CD4-positive, alpha-beta memory T cell (primary cell): ENCODE measurements at regions of chr12 and their contacts with region 1.

Region 1: GRCh38 chr12:10364815-10365622 is 24.8 kb downstream of the KLRK1 start:
- DNase-seq: peak; percentile 71 to 81 (median 76)
- H3K4me3 ChIP-seq: peak overlapping the region; percentile 77 to 95
- H3K4me3 Mint-ChIP-seq: no peak overlapping the region
- H3K27ac ChIP-seq: peak overlapping the region; percentile 49
- H3K27ac Mint-ChIP-seq: no peak overlapping the region
- H3K4me1 ChIP-seq: peaks cover 16% of the 10 kb centered on the region
- H3K4me1 Mint-ChIP-seq: peaks cover 1 to 7% (median 5%) of the 10 kb centered on the region in 4 donors
- H3K27me3 ChIP-seq: no peaks in the 10 kb centered on the region
- H3K27me3 Mint-ChIP-seq: peaks cover 2 to 4% of the 10 kb centered on the region in 2 donors

Region 2: DNA sequence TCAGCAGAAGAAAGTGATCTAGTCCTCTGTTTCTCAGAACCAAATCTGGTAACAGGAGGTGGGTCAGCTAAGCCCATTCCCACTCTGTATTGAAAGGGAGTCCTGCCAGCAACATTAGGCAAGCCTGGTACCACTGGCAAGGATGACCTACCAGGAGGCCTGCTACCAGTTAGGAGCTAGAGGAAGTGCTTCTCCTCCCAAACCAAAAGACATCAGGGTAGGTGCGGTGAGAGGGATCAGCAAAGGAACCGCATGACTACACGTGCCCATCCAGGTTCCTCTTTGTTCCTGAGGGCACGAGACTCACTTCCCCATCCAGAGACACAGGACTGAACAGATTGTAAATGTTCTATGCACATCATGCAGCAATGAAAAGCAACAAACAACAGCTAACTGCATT is 41.7 kb after region 1 on chr12:
- CTCF ChIA-PET with region 1: no interaction called
- POLR2A ChIA-PET with region 1: no interaction called
- intact Hi-C with region 1: no loop called
- DNase-seq: no peak
- H3K4me3 ChIP-seq: no peak overlapping the region
- H3K4me3 Mint-ChIP-seq: no peak overlapping the region
- H3K27ac ChIP-seq: no peak overlapping the region
- H3K27ac Mint-ChIP-seq: no peak overlapping the region
- H3K4me1 ChIP-seq: no peaks in the 10 kb centered on the region
- H3K4me1 Mint-ChIP-seq: no peaks in the 10 kb centered on the region
- H3K27me3 ChIP-seq: no peaks in the 10 kb centered on the region
- H3K27me3 Mint-ChIP-seq: peaks cover 0 to 15% of the 10 kb centered on the region in 2 donors

Region 3: GRCh38 chr12:10613349-10614055 is 248.5 kb after region 1 on chr12 and contains the start of gene MAGOHB:
- CTCF ChIA-PET with region 1: no interaction called
- POLR2A ChIA-PET with region 1: interaction called, 12 read pairs
- intact Hi-C with region 1: loop called (anchors 1 kb)
- DNase-seq: peak; percentile 96 to 98 (median 96)
- H3K4me3 ChIP-seq: peak within 1 kb of the TSS; percentile 92 to 96
- H3K4me3 Mint-ChIP-seq: peak within 1 kb of the TSS; percentile 99 to 100 (median 100)
- H3K27ac ChIP-seq: peak within 1 kb of the TSS; percentile 93
- H3K27ac Mint-ChIP-seq: peak within 1 kb of the TSS; percentile 99 to 100 (median 100)
- H3K4me1 ChIP-seq: peaks cover 22% of the 10 kb centered on the region
- H3K4me1 Mint-ChIP-seq: peaks cover 20 to 36% (median 27%) of the 10 kb centered on the region in 4 donors
- H3K27me3 ChIP-seq: no peaks in the 10 kb centered on the region
- H3K27me3 Mint-ChIP-seq: peaks cover 5 to 10% of the 10 kb centered on the region in 2 donors
- total RNA-seq, gene MAGOHB: 19.3 to 22.0 TPM